B cell (primary cell): ENCODE measurements at regions of chr10 and their contacts with region 1.

Region 1: GRCh38 chr10:72215652-72216549 is at the starts of genes ANAPC16 and ASCC1:
- DNase-seq: peak; percentile 97
- ATAC-seq: peak; percentile 78
- H3K4me3 ChIP-seq: peak within 1 kb of the TSS; percentile 79 to 92 (median 83)
- H3K4me3 Mint-ChIP-seq: peak within 1 kb of the TSS; percentile 99
- H3K27ac ChIP-seq: peak within 1 kb of the TSS; percentile 92
- H3K27ac Mint-ChIP-seq: peak within 1 kb of the TSS; percentile 100
- H3K4me1 ChIP-seq: peaks cover 42 to 54% of the 10 kb centered on the region in 2 donors
- H3K4me1 Mint-ChIP-seq: peaks cover 54% of the 10 kb centered on the region
- H3K27me3 ChIP-seq: no peaks in the 10 kb centered on the region
- H3K27me3 Mint-ChIP-seq: no peaks in the 10 kb centered on the region
- CTCF ChIP-seq: no peak
- total RNA-seq, gene ANAPC16: 128 and 132 TPM in 2 replicates
- total RNA-seq, gene ASCC1: 28.1 and 31.3 TPM in 2 replicates

Region 2: DNA sequence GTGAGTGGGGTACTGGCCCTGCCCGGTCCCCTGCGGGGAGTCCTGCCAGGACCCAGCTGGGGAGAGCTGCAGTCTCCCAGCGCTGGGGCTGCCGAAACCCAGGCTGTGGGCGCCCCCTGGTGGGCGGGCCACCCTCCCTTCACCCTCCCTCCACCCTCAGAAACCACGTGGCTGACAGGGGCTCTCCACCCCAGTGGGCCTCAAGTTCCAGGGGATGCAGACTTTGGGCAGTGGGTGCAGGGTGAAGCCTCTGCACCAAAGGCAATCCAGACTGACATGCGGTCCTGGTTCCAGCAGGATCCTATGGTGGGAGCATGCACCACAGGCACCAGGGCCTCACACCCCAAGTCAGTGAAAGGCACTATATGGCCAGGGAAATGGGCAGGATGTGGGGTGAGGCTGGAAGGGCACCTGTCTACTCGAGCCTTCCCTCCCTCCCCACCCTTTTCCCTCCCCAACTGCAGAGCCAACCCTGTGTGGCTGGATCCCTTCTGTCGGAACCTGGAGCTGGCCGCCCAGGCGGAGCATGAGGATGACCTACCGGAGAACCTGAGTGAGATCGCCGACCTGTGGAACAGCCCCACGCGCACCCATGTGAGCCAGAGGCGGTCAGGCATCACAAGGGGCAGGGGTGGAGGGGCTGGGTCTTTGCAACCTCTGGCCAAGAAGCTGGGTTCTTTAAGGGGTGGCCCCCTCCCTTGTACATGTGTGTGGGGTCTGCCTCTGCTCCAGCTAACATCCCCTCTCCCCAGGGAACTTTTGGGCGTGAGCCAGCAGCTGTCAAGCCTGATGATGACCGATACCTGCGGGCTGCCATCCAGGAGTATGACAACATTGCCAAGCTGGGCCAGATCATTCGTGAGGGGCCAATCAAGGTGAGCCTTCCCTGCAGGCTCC is 403.6 kb before region 1 on chr10:
- CTCF ChIA-PET with region 1: no interaction called
- POLR2A ChIA-PET with region 1: no interaction called
- intact Hi-C with region 1: no loop called
- DNase-seq: peak; percentile 85
- ATAC-seq: peak; percentile 93
- H3K4me3 ChIP-seq: no peak overlapping the region
- H3K4me3 Mint-ChIP-seq: no peak overlapping the region
- H3K27ac ChIP-seq: no peak overlapping the region
- H3K27ac Mint-ChIP-seq: no peak overlapping the region
- H3K4me1 ChIP-seq: peaks cover 5 to 11% of the 10 kb centered on the region in 2 donors
- H3K4me1 Mint-ChIP-seq: peaks cover 6% of the 10 kb centered on the region
- H3K27me3 ChIP-seq: no peaks in the 10 kb centered on the region
- H3K27me3 Mint-ChIP-seq: peaks cover 4% of the 10 kb centered on the region
- CTCF ChIP-seq: peak; percentile 84

Region 3: DNA sequence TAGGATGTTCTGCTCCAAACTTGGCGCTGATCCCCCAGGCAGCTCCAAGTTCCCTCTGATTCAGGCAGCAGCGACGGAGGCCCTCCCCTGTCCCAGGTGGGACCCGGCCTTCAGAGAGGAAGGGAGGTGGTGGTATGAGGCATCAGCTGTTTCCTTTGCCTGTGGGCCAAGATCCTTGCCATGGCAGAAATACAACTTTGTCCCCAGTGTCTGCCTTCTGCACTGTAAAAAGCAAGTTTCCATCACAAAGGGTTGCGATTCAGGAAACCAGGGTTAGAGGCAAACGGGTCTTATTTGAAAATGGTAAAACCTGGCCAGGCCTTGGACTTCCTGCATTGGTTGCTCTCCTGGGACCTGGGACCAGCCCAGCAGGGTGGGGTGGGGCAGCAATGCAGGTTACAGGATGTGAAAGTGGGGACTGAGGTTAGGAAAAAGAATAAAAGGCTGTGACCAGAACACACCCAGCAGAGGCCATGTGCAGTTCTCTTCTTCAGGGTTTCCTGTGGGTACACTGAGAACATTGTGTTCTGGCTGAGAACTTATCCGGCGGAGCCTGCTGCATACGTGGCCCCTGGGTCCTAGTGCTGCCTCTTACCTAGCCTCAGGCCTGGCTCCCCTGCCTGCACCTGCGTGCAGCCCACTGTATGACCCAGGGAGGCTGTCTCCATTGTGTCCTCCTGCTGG is 32.7 kb after region 1 on chr10:
- CTCF ChIA-PET with region 1: interaction called, 3 read pairs
- POLR2A ChIA-PET with region 1: interaction called, 4 read pairs
- intact Hi-C with region 1: loop called (anchors 1 kb)
- DNase-seq: peak; percentile 85
- ATAC-seq: peak; percentile 76
- H3K4me3 ChIP-seq: peak overlapping the region in 4 of 5 experiments; percentile 26 to 49 (median 44)
- H3K4me3 Mint-ChIP-seq: peak overlapping the region; percentile 91
- H3K27ac ChIP-seq: peak overlapping the region; percentile 76 to 81
- H3K27ac Mint-ChIP-seq: peak overlapping the region; percentile 98
- H3K4me1 ChIP-seq: peaks cover 78 to 83% of the 10 kb centered on the region in 2 donors
- H3K4me1 Mint-ChIP-seq: peaks cover 80% of the 10 kb centered on the region
- H3K27me3 ChIP-seq: no peaks in the 10 kb centered on the region
- H3K27me3 Mint-ChIP-seq: no peaks in the 10 kb centered on the region
- CTCF ChIP-seq: no peak

Region 4: GRCh38 chr10:72297968-72298773 is 82.3 kb after region 1 on chr10:
- CTCF ChIA-PET with region 1: interaction called, 4 read pairs
- POLR2A ChIA-PET with region 1: interaction called, 23 read pairs
- intact Hi-C with region 1: loop called (anchors 1 kb)
- DNase-seq: peak; percentile 96
- ATAC-seq: peak; percentile 71
- H3K4me3 ChIP-seq: peak overlapping the region in 4 of 5 experiments; percentile 74 to 90 (median 86)
- H3K4me3 Mint-ChIP-seq: peak overlapping the region; percentile 92
- H3K27ac ChIP-seq: peak overlapping the region; percentile 99 to 100
- H3K27ac Mint-ChIP-seq: peak overlapping the region; percentile 99
- H3K4me1 ChIP-seq: peaks cover 27 to 38% of the 10 kb centered on the region in 2 donors
- H3K4me1 Mint-ChIP-seq: peaks cover 56% of the 10 kb centered on the region
- H3K27me3 ChIP-seq: no peaks in the 10 kb centered on the region
- H3K27me3 Mint-ChIP-seq: no peaks in the 10 kb centered on the region
- CTCF ChIP-seq: no peak

Region 5: GRCh38 chr10:72331601-72332422 is 115.9 kb after region 1 on chr10:
- CTCF ChIA-PET with region 1: interaction called, 170 read pairs
- POLR2A ChIA-PET with region 1: interaction called, 6 read pairs
- intact Hi-C with region 1: loop called (anchors 1 kb)
- DNase-seq: peak; percentile 93
- ATAC-seq: peak; percentile 79
- H3K4me3 ChIP-seq: peak overlapping the region in 4 of 5 experiments; percentile 31 to 38 (median 35)
- H3K4me3 Mint-ChIP-seq: peak overlapping the region; percentile 76
- H3K27ac ChIP-seq: peak overlapping the region; percentile 83 to 86
- H3K27ac Mint-ChIP-seq: peak overlapping the region; percentile 96
- H3K4me1 ChIP-seq: peaks cover 84 to 100% of the 10 kb centered on the region in 2 donors
- H3K4me1 Mint-ChIP-seq: peaks cover 90% of the 10 kb centered on the region
- H3K27me3 ChIP-seq: no peaks in the 10 kb centered on the region
- H3K27me3 Mint-ChIP-seq: no peaks in the 10 kb centered on the region
- CTCF ChIP-seq: peak; percentile 55

Region 6: GRCh38 chr10:72625608-72626443 is 409.9 kb after region 1 on chr10 and contains the start of gene MICU1:
- CTCF ChIA-PET with region 1: no interaction called
- POLR2A ChIA-PET with region 1: no interaction called
- intact Hi-C with region 1: loop called (anchors 5 kb)
- DNase-seq: peak; percentile 95
- ATAC-seq: peak; percentile 99
- H3K4me3 ChIP-seq: peak within 1 kb of the TSS; percentile 72 to 99 (median 89)
- H3K4me3 Mint-ChIP-seq: peak within 1 kb of the TSS; percentile 99
- H3K27ac ChIP-seq: peak within 1 kb of the TSS; percentile 52 to 81
- H3K27ac Mint-ChIP-seq: peak within 1 kb of the TSS; percentile 92
- H3K4me1 ChIP-seq: peaks cover 8 to 9% of the 10 kb centered on the region in 2 donors
- H3K4me1 Mint-ChIP-seq: peaks cover 13% of the 10 kb centered on the region
- H3K27me3 ChIP-seq: no peaks in the 10 kb centered on the region
- H3K27me3 Mint-ChIP-seq: no peaks in the 10 kb centered on the region
- CTCF ChIP-seq: no peak
- total RNA-seq, gene MICU1: 34.7 and 42.9 TPM in 2 replicates